A549 (cell line): ENCODE measurements at regions of chr2 and their contacts with region 1.

Region 1: GRCh38 chr2:157336137-157337010 is 10.8 kb upstream of the ERMN start:
- DNase-seq: peak in 1 of 2 experiments; percentile 44
- ATAC-seq: peak; percentile 74 to 92; a peak in 5 of 6 replicates
- H3K4me3 ChIP-seq: no peak overlapping the region
- H3K27ac ChIP-seq: no peak overlapping the region
- H3K4me1 ChIP-seq: no peaks in the 10 kb centered on the region
- CTCF ChIP-seq: peak; percentile 75
- EP300 ChIP-seq: no peak
- POLR2A ChIP-seq: no peak
- RAD21 ChIP-seq: peak; percentile 26 to 35; a peak in 2 of 5 replicates

Region 2: DNA sequence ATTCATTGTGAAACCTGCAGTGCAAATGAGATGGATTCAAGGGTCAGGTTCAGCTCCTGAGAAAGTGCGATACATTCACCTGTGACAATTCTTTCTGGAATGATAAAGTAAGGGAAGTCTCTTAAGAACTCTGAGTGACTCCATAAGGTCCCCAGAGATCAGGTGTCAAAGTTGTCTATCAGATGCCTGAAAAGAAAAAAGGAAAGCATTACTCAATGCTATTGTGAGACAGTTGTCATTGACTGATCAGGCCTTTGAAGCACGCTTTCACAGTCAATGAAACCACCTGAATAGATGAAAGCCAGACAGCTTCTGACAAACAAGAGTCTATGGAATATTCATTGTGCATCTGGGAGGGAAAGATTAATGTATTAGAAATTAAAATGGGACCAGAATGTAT is 331.6 kb before region 1 on chr2:
- CTCF ChIA-PET with region 1: no interaction called
- POLR2A ChIA-PET with region 1: no interaction called
- DNase-seq: no peak
- ATAC-seq: no peak
- H3K4me3 ChIP-seq: no peak overlapping the region
- H3K27ac ChIP-seq: no peak overlapping the region
- H3K4me1 ChIP-seq: no peaks in the 10 kb centered on the region
- CTCF ChIP-seq: no peak
- EP300 ChIP-seq: no peak
- POLR2A ChIP-seq: no peak
- RAD21 ChIP-seq: no peak

Region 3: GRCh38 chr2:157320409-157320808 is 16.0 kb before region 1 on chr2:
- CTCF ChIA-PET with region 1: interaction called, 79 read pairs
- POLR2A ChIA-PET with region 1: no interaction called
- DNase-seq: no peak
- ATAC-seq: no peak
- H3K4me3 ChIP-seq: no peak overlapping the region
- H3K27ac ChIP-seq: no peak overlapping the region
- H3K4me1 ChIP-seq: no peaks in the 10 kb centered on the region
- CTCF ChIP-seq: no peak
- EP300 ChIP-seq: no peak
- POLR2A ChIP-seq: no peak
- RAD21 ChIP-seq: no peak